Vagina (tissue), 2 donors: ENCODE measurements at regions of chr22 and their contacts with region 1.

Region 1: GRCh38 chr22:50326959-50327710 is at the start of gene DENND6B:
- DNase-seq: no peak
- H3K4me3 ChIP-seq: peak within 1 kb of the TSS; percentile 91 to 96
- H3K27ac ChIP-seq: peak within 1 kb of the TSS; percentile 95
- H3K4me1 ChIP-seq: peaks cover 17% of the 10 kb centered on the region
- H3K27me3 ChIP-seq: no peaks in the 10 kb centered on the region
- CTCF ChIP-seq: peak; percentile 26 to 60 (median 36)
- POLR2A ChIP-seq: no peak
- total RNA-seq, gene DENND6B: 2.7 TPM

Region 2: DNA sequence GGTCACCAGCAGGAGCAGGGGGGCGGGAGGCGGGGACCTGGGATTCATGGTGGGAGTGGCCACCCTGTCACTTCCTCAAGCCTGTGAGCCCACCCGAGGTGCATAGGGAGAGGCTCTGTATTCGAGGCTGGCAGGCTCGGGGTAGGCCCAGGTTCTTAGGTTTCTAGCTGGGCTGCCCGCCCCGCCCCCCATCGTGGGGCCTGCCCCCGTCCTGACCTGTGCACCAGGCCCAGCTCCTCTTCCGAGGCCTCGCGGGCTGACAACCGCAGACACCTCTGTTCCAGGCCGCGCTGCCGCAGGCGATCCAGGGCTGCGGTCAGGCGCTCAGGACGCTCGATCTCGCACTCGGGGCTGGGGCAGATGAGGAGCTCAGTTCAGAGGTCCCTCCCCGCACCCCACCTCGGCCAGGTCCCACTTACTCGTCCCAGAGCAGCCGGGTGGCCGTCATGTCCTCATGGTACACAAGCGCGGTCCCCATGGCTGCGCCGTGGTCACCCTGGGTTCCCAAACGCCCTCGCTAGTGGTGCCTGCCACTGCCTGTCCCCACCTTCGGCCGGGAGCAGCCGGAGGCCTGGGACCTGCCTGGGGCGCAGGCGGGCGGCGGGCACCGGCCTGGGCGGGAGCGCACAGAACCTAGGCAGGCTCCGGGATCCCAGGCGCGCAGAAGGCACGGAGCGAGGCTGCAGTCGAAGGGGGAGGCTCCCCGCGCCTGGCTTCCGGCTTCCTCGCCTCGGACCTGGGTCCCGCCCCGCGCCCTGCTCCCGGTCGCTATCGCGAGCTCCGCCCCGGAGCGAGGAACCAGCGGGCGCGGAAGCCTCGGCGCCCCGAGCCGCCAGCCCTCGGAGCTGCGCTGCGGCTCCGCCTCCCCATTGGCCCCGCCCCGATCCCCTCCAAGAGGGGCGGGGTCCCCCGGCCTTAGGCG is 76.3 kb before region 1 on chr22 and contains the start of gene HDAC10:
- intact Hi-C with region 1: loop called (anchors 5 kb)
- DNase-seq: no peak
- H3K4me3 ChIP-seq: peak within 1 kb of the TSS; percentile 60 to 88
- H3K27ac ChIP-seq: peak within 1 kb of the TSS; percentile 79
- H3K4me1 ChIP-seq: peaks cover 50% of the 10 kb centered on the region
- H3K27me3 ChIP-seq: no peaks in the 10 kb centered on the region
- CTCF ChIP-seq: no peak
- POLR2A ChIP-seq: no peak
- total RNA-seq, gene HDAC10: 29.2 TPM

Region 3: DNA sequence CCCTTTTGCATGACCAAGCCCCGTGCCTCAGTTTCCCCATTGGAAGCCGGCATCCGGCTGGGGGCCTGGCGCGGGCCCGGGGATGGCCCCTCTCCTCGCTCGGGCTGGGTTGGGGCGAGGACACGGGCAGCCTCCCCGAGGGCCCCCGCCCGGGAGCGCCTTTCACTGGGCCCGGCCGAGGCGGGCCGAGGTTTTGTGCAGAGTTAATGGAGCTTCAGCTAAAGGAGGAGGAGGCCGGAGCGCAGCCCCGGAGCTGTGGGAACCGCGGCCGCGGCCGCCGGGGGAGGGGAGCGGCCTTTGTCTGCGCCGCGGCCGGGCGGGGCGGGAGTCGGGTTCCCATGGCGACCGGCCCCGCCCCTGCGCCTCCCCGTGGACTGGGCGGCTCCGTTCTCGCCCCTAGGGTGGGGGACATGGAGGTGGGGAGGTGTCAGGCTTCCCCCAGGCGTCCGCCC is 55.6 kb before region 1 on chr22:
- intact Hi-C with region 1: loop called (anchors 5 kb)
- DNase-seq: no peak
- H3K4me3 ChIP-seq: peak overlapping the region; percentile 49 to 57
- H3K27ac ChIP-seq: no peak overlapping the region
- H3K4me1 ChIP-seq: peaks cover 62% of the 10 kb centered on the region
- H3K27me3 ChIP-seq: no peaks in the 10 kb centered on the region
- CTCF ChIP-seq: no peak
- POLR2A ChIP-seq: no peak

Region 4: GRCh38 chr22:50435291-50436014 is 108.3 kb after region 1 on chr22:
- intact Hi-C with region 1: no loop called
- DNase-seq: no peak
- H3K4me3 ChIP-seq: no peak overlapping the region
- H3K27ac ChIP-seq: no peak overlapping the region
- H3K4me1 ChIP-seq: no peaks in the 10 kb centered on the region
- H3K27me3 ChIP-seq: no peaks in the 10 kb centered on the region
- CTCF ChIP-seq: no peak
- POLR2A ChIP-seq: no peak